HCT116 (cell line): ENCODE measurements at regions of chr17 and their contacts with region 1.

Region 1: DNA sequence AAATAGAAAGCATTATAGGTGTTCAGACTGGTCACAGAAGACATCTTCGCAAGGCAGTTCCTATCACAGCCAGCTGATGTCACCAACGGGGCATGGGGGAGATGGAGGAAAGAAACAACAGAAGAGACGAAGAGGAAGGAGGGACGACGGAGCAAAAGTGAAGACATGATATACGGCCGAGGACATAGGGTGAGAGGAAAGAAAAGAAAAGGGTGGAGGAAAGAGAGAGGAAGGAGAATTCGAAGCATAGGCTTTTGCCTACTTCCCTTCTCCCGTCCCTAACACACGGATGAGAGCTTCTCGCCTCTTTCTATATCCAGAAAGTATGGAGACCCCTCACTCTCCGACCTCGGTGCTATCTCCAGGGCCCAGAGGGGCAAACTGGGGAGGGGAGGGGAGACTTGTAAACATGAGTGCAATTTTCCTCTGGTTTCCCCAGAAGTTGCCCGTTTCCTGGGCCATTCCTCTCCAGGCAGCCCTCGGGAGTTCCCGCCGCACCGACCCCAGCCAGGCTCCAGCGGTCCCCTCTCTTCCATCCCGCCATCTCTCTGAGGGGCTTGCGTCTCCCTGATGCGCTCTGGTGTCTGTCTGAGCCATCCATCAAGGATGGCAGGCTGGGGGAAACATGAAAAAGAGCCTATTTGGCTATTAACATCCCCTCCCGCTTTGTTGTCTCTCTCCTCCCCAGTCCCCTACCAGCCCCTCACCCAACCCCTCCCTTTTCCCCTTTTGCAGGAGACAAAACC is 26.0 kb downstream of the COPZ2 start:
- DNase-seq: peak; percentile 35
- ATAC-seq: peak; percentile 89
- H3K4me3 ChIP-seq: peak overlapping the region in 1 of 2 experiments; percentile 44; a peak in 2 of 4 replicates
- H3K27ac ChIP-seq: no peak overlapping the region
- H3K4me1 ChIP-seq: peaks cover 5 to 17% of the 10 kb centered on the region in 2 experiments; a peak in 3 of 4 replicates
- H3K27me3 ChIP-seq: no peaks in the 10 kb centered on the region
- CTCF ChIP-seq: peak; percentile 53 to 89 (median 86); a peak in 5 of 6 replicates
- POLR2A ChIP-seq: no peak
- RAD21 ChIP-seq: peak; percentile 69

Region 2: DNA sequence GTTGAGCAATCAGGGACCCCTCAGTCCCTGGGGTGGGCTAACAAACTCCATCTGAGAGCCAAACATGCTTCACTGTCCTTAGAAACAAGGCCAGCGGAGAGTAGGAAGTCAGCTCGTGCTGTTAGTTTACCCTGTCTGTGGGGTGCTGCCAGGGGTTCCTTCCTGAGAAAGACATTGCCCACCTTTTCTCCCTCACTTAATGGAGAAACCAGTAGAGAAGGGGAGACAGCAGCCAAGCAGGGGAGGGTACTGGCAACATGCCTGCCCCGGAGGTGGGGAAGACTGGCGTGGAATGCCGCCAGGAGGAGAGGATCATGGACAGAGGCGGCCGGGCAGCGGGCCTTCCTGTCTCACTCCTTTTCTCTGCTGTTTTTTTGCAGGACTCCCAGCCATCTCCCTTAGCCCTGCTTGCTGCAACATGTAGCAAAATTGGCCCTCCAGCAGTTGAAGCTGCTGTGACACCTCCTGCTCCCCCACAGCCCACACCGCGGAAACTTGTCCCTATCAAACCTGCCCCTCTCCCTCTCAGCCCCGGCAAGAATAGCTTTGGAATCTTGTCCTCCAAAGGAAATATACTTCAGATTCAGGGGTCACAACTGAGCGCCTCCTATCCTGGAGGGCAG is 95.7 kb before region 1 on chr17:
- CTCF ChIA-PET with region 1: no interaction called
- POLR2A ChIA-PET with region 1: no interaction called
- RAD21 ChIA-PET with region 1: no interaction called
- intact Hi-C with region 1: no loop called
- DNase-seq: no peak
- ATAC-seq: 0 out of 2 replicates have a peak, but pooled peaks have one; percentile 26
- H3K4me3 ChIP-seq: no peak overlapping the region
- H3K27ac ChIP-seq: no peak overlapping the region
- H3K4me1 ChIP-seq: no peaks in the 10 kb centered on the region
- H3K27me3 ChIP-seq: no peaks in the 10 kb centered on the region
- CTCF ChIP-seq: no peak
- POLR2A ChIP-seq: no peak
- RAD21 ChIP-seq: no peak

Region 3: DNA sequence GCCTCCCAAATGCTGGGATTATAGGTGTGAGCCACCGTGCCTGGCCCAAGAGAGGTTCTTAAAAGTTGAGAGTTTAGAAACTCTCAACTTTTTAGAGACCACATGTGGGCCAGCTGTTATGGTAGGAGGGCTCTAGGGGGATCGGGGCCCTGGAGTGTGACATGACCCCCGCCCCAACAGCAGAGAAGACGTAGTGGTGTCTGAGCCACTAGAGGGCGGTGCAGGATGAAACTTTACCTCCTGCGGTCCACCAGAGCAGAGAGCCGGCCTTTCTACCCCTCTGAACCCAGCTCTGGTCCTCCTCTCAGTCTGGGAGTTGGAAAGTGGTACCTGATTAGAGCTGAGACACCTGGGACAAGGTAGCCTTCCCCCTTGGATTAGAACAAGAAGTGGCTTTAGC is 33.3 kb before region 1 on chr17:
- CTCF ChIA-PET with region 1: interaction called, 46 read pairs
- POLR2A ChIA-PET with region 1: no interaction called
- RAD21 ChIA-PET with region 1: interaction called in 1 of 2 experiments, 4 read pairs
- intact Hi-C with region 1: no loop called
- DNase-seq: no peak
- ATAC-seq: peak; percentile 88
- H3K4me3 ChIP-seq: no peak overlapping the region
- H3K27ac ChIP-seq: no peak overlapping the region
- H3K4me1 ChIP-seq: no peaks in the 10 kb centered on the region
- H3K27me3 ChIP-seq: no peaks in the 10 kb centered on the region
- CTCF ChIP-seq: peak; percentile 73 to 88 (median 84)
- POLR2A ChIP-seq: no peak
- RAD21 ChIP-seq: peak; percentile 74

Region 4: DNA sequence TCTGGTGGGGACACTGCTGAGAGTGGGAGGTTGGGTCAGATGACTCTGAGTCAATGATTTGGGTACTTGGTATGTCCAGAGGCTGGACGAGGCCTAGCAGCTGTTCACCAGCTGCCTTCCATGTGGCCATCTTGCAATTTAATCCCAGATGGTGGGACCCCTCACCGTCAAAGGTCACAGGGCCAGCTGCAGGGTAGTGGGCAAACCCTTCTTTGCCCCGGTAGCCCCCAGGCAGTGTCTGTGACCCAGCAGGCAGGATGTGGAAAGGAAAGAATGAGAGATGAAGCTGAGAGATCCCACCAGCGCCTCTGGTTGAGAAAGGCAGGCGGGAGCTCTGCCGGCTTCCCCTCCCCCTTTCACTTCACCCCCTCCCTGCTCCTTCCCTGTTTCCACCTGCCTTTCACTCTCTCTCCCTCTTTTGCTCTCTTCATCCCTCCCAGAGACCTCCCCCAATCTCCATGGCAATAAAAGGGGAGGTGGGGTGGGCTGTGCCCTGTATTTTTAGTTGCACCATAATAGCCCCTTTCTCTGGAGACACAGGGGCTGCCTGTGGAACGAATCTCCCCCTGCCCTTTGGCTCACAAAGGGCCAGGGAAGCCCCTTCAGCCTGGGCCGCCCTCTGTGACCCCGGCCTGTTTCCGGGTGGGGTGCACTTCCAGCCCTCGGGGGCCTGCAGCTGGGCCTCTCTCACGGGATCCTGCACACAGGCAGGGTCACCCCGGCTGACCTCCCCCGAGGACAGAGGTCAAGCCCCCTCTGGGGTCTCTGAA is 20.4 kb before region 1 on chr17:
- CTCF ChIA-PET with region 1: no interaction called
- POLR2A ChIA-PET with region 1: no interaction called
- RAD21 ChIA-PET with region 1: no interaction called
- intact Hi-C with region 1: no loop called
- DNase-seq: no peak
- ATAC-seq: no peak
- H3K4me3 ChIP-seq: no peak overlapping the region
- H3K27ac ChIP-seq: no peak overlapping the region
- H3K4me1 ChIP-seq: no peaks in the 10 kb centered on the region
- H3K27me3 ChIP-seq: no peaks in the 10 kb centered on the region
- CTCF ChIP-seq: no peak
- POLR2A ChIP-seq: no peak
- RAD21 ChIP-seq: no peak